ENCODE measurements at regions of chr22 and their contacts with region 1.

Region 1: GRCh38 chr22:24503137-24503842 is 8.2 kb downstream of the UPB1 start:
- DNase-seq: peak; percentile 47
- ATAC-seq: peak; percentile 60; the same call in 1 of the 2 replicates
- H3K4me3 ChIP-seq: no peak overlapping the region
- H3K27ac ChIP-seq: no peak overlapping the region
- H3K4me1 ChIP-seq: peaks cover 12% of the 10 kb centered on the region
- H3K27me3 ChIP-seq: no peaks in the 10 kb centered on the region
- CTCF ChIP-seq: peak; percentile 75

Region 2: GRCh38 chr22:24434471-24435322 is 68.6 kb before region 1 on chr22:
- CTCF ChIA-PET with region 1: interaction called, 4 read pairs
- POLR2A ChIA-PET with region 1: no interaction called
- intact Hi-C with region 1: loop called (anchors 5 kb)
- DNase-seq: no peak
- ATAC-seq: no peak
- H3K4me3 ChIP-seq: no peak overlapping the region
- H3K27ac ChIP-seq: no peak overlapping the region
- H3K4me1 ChIP-seq: peaks cover 3% of the 10 kb centered on the region; the same call in 1 of the 2 replicates
- H3K27me3 ChIP-seq: no peaks in the 10 kb centered on the region
- CTCF ChIP-seq: no peak

Region 3: DNA sequence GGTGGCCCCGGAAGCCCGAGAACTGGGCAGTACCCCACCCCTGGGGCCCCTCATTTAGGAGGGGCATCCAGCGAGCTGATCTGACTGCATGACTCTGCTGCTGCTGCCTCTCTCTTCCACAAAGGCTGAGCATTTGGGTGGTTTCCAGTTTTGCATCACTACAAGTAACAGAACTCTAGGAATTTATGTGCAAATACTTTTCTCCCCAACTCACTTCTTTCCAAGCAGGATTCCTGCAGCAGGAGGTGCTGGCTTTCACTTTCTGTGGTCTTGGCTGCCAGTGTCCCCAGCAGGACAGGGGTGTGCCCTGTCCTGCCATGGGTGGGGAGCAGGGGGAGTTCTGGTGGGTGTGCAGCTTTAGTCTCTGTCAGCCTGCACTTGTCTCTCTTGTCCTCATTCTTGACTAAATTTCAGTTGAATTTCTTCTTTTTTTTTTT is 13.0 kb after region 1 on chr22:
- CTCF ChIA-PET with region 1: interaction called, 10 read pairs
- POLR2A ChIA-PET with region 1: no interaction called
- intact Hi-C with region 1: no loop called
- DNase-seq: peak; percentile 16
- ATAC-seq: no peak
- H3K4me3 ChIP-seq: no peak overlapping the region
- H3K27ac ChIP-seq: no peak overlapping the region
- H3K4me1 ChIP-seq: no peaks in the 10 kb centered on the region
- H3K27me3 ChIP-seq: no peaks in the 10 kb centered on the region
- CTCF ChIP-seq: no peak